ENCODE measurements at regions of chr6 and their contacts with region 1.

Region 1: GRCh38 chr6:22558334-22558747 is 11.0 kb upstream of the HDGFL1 start:
- DNase-seq: no peak
- ATAC-seq: no peak
- H3K4me3 Mint-ChIP-seq: no peak overlapping the region
- H3K27ac Mint-ChIP-seq: no peak overlapping the region
- H3K4me1 Mint-ChIP-seq: no peaks in the 10 kb centered on the region
- H3K27me3 Mint-ChIP-seq: no peaks in the 10 kb centered on the region

Region 2: GRCh38 chr6:22497276-22497675 is 61.1 kb before region 1 on chr6:
- CTCF ChIA-PET with region 1: no interaction called
- POLR2A ChIA-PET with region 1: interaction called, 10 read pairs
- intact Hi-C with region 1: no loop called
- DNase-seq: no peak
- ATAC-seq: no peak
- H3K4me3 Mint-ChIP-seq: no peak overlapping the region
- H3K27ac Mint-ChIP-seq: no peak overlapping the region
- H3K4me1 Mint-ChIP-seq: no peaks in the 10 kb centered on the region
- H3K27me3 Mint-ChIP-seq: no peaks in the 10 kb centered on the region

Region 3: DNA sequence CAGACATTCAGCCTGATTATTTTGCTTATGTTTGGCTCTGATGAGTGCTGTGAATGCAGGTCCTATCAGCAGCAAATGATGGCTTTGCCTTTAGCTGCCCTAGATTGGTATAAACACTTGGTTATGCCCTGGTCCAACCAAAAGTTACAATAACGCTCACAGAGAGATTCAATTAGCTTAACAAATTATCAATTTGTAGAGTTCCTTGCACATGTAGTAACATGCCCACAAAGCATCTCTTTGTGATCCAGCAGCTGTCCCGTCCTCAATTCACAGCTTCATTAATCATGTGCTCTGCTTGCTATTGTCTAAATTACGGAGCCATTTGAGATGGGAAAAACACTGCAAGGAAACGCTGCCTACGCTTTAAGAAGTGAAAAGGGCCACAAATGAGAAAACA is 468.9 kb after region 1 on chr6:
- CTCF ChIA-PET with region 1: no interaction called
- POLR2A ChIA-PET with region 1: no interaction called
- intact Hi-C with region 1: no loop called
- DNase-seq: no peak
- ATAC-seq: no peak
- H3K4me3 Mint-ChIP-seq: no peak overlapping the region
- H3K27ac Mint-ChIP-seq: no peak overlapping the region
- H3K4me1 Mint-ChIP-seq: no peaks in the 10 kb centered on the region
- H3K27me3 Mint-ChIP-seq: no peaks in the 10 kb centered on the region